Endothelial cell of umbilical vein (primary cell): ENCODE measurements at regions of chr11 and their contacts with region 1.

Region 1: GRCh38 chr11:70333261-70333660 is 62.8 kb downstream of the PPFIA1 start:
- DNase-seq: no peak
- H3K4me3 ChIP-seq: no peak overlapping the region
- H3K27ac ChIP-seq: no peak overlapping the region
- H3K4me1 ChIP-seq: no peaks in the 10 kb centered on the region
- H3K27me3 ChIP-seq: no peaks in the 10 kb centered on the region
- CTCF ChIP-seq: no peak
- POLR2A ChIP-seq: no peak

Region 2: GRCh38 chr11:70281156-70281609 is 52.1 kb before region 1 on chr11:
- CTCF ChIA-PET with region 1: no interaction called
- POLR2A ChIA-PET with region 1: no interaction called
- dilution Hi-C with region 1: no loop called
- intact Hi-C with region 1: loop called (anchors 10 kb)
- DNase-seq: peak; percentile 67
- H3K4me3 ChIP-seq: no peak overlapping the region
- H3K27ac ChIP-seq: peak overlapping the region; percentile 45
- H3K4me1 ChIP-seq: peaks cover 14% of the 10 kb centered on the region
- H3K27me3 ChIP-seq: no peaks in the 10 kb centered on the region
- CTCF ChIP-seq: no peak
- POLR2A ChIP-seq: no peak

Region 3: DNA sequence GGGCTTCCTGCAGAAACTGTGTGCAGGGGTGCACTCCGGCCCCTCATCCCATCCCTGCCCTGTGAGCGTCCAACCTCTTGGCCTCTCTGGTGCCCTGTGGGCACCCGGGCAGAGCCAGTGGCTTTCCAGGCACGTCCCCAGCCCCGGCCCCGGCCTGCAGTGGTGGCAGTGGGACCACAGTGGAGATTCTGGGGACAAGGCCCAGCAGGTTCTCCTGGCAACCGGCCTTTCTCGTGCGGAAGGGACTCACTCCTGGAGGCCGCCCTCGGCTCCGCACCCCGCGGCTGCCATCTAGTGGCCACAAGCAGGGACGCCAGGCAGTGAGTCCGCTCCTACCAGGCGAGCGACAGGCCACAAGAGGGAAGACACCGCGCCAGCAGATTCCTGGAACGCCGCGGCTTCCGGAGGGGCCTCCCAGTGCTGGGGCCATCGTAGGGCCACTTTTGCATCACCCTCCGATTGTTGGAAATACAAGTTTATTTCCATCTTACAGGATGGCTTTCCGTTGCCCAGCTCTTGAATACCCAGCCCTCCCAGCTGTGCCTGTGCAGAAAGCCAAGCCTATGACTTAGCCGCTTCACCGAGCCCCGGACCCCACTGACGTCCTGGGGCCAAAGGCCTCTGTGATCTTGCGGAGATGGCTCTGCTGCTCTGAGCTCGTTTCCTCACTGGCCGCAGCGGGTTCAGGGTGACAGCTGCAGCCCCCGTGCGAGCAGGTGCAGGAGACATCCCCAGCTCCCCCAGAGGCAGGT is 422.3 kb after region 1 on chr11:
- CTCF ChIA-PET with region 1: no interaction called
- POLR2A ChIA-PET with region 1: no interaction called
- dilution Hi-C with region 1: no loop called
- intact Hi-C with region 1: no loop called
- DNase-seq: peak; percentile 37
- H3K4me3 ChIP-seq: no peak overlapping the region
- H3K27ac ChIP-seq: no peak overlapping the region
- H3K4me1 ChIP-seq: no peaks in the 10 kb centered on the region
- H3K27me3 ChIP-seq: no peaks in the 10 kb centered on the region
- CTCF ChIP-seq: peak; percentile 87 to 97
- POLR2A ChIP-seq: no peak